ENCODE measurements at regions of chr5 and their contacts with region 1.

Region 1: DNA sequence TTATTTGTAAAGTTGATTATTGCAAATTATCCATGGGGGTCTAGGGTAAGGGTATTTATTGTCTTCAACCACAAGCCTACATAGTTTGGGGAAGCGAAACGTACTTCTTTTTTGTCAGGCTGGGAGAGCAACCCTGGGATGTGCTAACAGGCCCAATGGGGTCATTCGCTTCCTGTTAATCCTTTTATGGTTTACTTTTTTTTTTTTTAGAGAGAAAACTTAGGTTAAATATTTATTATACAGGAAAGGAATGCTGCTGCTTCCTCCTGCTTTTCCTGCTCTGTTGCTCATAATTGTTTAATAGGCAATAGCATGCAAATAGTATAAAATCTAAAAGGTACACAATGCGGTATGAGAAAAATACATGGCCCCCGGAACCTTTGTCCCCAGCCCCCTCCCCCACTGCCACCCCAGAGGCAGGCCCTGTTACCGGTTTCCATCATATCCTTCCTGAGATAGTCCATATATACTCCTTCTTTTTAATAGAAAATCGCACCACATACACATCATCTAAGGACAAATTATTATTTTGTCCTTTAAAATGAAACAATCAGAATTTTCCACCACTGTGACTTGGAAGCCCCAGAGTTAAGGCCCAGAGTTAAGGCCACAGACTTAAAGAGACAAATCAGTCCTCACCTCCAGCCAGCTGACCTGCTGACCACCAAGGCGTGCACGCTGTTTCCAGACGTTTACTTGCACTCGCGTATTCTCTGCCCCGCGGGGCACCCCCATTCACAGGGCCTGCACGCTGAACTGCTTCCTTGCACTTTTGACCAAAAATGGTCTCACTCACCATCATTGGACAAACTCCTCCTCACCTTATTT is 83.9 kb downstream of the NDFIP1 start:
- DNase-seq: peak in 1 of 2 donors; percentile 45
- H3K4me3 ChIP-seq: peak overlapping the region in 1 of 2 donors; percentile 28
- H3K27ac ChIP-seq: peak overlapping the region; percentile 25 to 76
- H3K4me1 ChIP-seq: peaks cover 0 to 19% of the 10 kb centered on the region in 2 donors
- H3K27me3 ChIP-seq: no peaks in the 10 kb centered on the region
- CTCF ChIP-seq: no peak

Region 2: GRCh38 chr5:142215915-142216681 is 23.6 kb after region 1 on chr5:
- intact Hi-C with region 1: loop called (anchors 1 kb)
- DNase-seq: peak; percentile 23 to 92
- H3K4me3 ChIP-seq: peak overlapping the region in 1 of 2 donors; percentile 4
- H3K27ac ChIP-seq: peak overlapping the region; percentile 67 to 80
- H3K4me1 ChIP-seq: peaks cover 4 to 13% of the 10 kb centered on the region in 2 donors
- H3K27me3 ChIP-seq: no peaks in the 10 kb centered on the region
- CTCF ChIP-seq: no peak

Region 3: DNA sequence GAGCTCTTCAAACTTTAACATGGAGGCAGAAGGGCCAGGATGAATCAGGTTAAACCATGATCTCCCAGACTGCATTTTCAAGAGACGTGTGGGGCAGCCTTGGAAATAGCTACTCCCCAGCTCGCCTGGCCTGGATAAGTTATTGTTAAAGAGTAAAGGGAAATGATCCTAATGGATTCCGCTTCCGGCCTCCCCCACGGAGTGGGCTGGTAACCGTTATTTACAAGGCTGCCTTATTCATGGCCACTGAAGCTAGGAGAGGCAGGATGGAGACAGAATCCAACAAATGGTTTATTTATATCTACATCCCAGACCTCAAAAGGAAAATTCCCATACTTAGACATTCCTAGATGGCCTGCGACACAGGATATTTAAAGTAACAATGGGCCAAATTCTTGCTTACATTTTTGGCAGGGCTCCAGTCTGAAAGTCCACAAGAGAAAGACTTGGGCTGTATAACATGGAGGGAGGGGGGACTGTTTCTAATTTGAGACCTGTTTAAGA is 104.5 kb after region 1 on chr5:
- intact Hi-C with region 1: loop called (anchors 1 kb)
- DNase-seq: peak in 1 of 2 donors; percentile 83
- H3K4me3 ChIP-seq: no peak overlapping the region
- H3K27ac ChIP-seq: peak overlapping the region; percentile 83 to 94
- H3K4me1 ChIP-seq: peaks cover 9 to 23% of the 10 kb centered on the region in 2 donors
- H3K27me3 ChIP-seq: no peaks in the 10 kb centered on the region
- CTCF ChIP-seq: no peak